AG04450 (cell line): ENCODE measurements at regions of chr5 and their contacts with region 1.

Region 1: GRCh38 chr5:39376293-39376714 is 12.0 kb upstream of the C9 start:
- DNase-seq: no peak
- H3K4me3 ChIP-seq: no peak overlapping the region
- H3K27ac ChIP-seq: no peak overlapping the region
- H3K27me3 ChIP-seq: no peaks in the 10 kb centered on the region
- CTCF ChIP-seq: peak; percentile 80

Region 2: DNA sequence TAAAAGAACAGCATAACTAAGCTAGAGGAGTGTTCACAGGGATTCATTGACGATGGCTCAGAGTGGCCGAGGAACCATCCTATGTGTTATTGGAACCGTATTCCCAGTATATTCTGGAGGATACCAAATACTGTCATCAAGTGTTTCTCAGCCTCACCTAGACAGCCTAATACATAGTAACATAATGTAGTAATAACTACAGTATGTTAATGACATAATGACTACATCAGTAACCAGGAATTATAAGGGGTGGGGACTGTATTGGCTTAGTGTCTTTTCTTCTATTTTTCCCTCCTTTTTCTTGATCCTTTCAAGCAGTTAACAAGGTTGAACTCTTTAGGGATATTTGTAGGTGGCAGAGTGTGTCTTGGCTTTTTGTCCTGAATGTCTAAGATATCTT is 14.6 kb after region 1 on chr5:
- CTCF ChIA-PET with region 1: interaction called, 44 read pairs
- POLR2A ChIA-PET with region 1: no interaction called
- DNase-seq: no peak
- H3K4me3 ChIP-seq: no peak overlapping the region
- H3K27ac ChIP-seq: no peak overlapping the region
- H3K27me3 ChIP-seq: no peaks in the 10 kb centered on the region
- CTCF ChIP-seq: no peak

Region 3: DNA sequence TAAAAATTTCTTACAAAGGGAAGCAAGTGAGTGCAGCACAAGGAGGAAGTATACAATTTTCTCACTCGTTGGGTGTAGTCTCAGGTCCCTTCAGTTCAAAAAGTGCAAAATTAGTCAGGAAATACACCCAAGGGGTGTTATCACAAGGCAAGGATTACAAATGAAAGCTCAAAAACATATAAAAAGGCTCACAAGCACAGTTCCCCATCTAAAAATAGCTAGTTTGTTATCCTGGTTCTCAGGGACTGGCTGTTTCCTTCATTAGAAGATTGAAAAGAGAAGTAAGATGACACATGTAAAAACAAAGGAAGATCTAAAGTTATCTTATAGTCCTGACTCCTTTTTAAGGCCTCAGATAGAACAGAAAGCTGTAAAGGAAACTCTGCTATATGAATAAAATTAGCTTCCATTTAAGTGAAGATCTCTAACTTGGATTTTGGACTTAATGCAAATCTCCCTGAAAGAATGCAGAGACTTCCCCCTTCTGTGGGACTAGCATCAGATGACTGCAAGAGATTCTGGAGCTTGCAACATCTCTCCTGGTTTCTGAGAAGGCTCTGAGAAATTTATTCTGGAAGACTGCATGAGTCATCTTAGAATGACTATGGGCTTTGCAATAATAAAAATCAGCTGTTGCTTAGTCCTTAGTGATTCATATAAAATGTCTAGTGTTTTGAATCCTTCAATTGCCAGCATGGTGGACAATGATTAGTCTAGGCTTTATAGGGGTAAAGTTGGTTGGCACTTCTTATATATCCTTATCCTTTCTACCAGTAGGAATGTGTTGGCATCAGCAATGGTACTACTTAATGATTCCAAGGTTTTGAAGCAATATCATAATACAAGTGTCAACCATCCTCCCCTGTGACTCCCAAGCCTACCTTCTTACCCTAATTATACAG is 23.1 kb after region 1 on chr5:
- CTCF ChIA-PET with region 1: interaction called, 44 read pairs
- POLR2A ChIA-PET with region 1: interaction called, 3 read pairs
- DNase-seq: peak; percentile 93
- H3K4me3 ChIP-seq: no peak overlapping the region
- H3K27ac ChIP-seq: peak overlapping the region; percentile 92
- H3K27me3 ChIP-seq: no peaks in the 10 kb centered on the region
- CTCF ChIP-seq: no peak

Region 4: GRCh38 chr5:39411051-39411450 is 34.7 kb after region 1 on chr5:
- CTCF ChIA-PET with region 1: interaction called, 22 read pairs
- POLR2A ChIA-PET with region 1: no interaction called
- DNase-seq: no peak
- H3K4me3 ChIP-seq: no peak overlapping the region
- H3K27ac ChIP-seq: peak overlapping the region; percentile 58
- H3K27me3 ChIP-seq: no peaks in the 10 kb centered on the region
- CTCF ChIP-seq: no peak

Region 5: GRCh38 chr5:39570403-39571027 is 194.2 kb after region 1 on chr5:
- CTCF ChIA-PET with region 1: interaction called, 106 read pairs
- POLR2A ChIA-PET with region 1: no interaction called
- DNase-seq: no peak
- H3K4me3 ChIP-seq: no peak overlapping the region
- H3K27ac ChIP-seq: no peak overlapping the region
- H3K27me3 ChIP-seq: peaks cover 6% of the 10 kb centered on the region
- CTCF ChIP-seq: peak; percentile 78